Panc1 (cell line): ENCODE measurements at regions of chr1 and their contacts with region 1.

Region 1: DNA sequence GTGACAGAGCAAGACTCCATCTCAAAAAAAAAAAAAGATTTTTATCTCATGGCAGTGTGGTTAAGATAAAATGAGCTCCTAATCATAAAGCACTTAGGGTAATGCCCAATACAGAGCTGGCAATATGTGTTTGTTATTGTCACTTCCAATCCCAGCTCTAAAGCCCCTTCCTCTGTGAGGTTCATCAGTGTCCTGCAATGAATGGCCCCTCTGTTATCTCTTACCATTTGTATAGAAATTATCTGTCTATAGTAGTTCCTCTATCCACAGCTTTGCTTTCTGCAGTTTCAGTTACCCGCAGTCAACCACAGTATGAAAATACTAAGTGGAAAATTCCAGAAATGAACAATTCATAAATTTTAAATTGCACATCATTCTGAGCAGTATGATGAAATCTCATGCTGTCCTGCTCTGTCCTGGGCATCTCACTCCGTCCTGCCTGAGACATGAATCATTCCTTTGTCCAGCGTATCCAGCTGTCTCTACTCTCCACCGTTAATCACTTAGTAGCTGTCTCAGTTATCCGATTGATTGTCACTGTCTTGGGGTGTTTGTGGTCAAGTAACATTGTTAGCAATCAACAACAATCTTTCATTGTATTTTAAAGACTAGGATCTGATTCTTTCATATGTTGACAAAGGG is 50.2 kb upstream of the DNAH14 start:
- DNase-seq: no peak
- ATAC-seq: no peak
- H3K4me3 ChIP-seq: no peak overlapping the region
- H3K27ac ChIP-seq: no peak overlapping the region
- H3K4me1 ChIP-seq: no peaks in the 10 kb centered on the region
- H3K27me3 ChIP-seq: no peaks in the 10 kb centered on the region; the same call in 1 of the 2 replicates
- CTCF ChIP-seq: no peak

Region 2: DNA sequence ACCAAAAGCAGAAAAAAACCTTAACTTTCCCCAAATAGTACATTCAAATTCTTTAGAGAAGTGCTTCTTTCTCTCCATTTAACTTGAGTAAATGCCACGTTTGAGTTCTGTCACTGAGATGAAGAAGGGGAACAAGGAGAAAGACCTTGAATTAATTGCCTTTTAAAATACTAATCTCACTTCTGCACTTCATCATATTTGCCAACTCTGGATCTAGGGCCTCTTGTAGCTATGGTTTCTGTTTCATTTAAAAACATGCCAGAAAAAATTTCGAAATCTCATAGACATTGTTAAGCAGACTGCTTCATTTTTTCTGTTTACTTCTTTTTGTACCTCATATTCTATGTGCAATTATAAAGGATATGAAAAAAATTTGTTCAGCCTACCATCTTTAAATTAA is 1368.8 kb after region 1 on chr1:
- CTCF ChIA-PET with region 1: no interaction called
- POLR2A ChIA-PET with region 1: interaction called, 16 read pairs
- in situ Hi-C with region 1: no loop called
- intact Hi-C with region 1: no loop called
- DNase-seq: no peak
- ATAC-seq: no peak
- H3K4me3 ChIP-seq: no peak overlapping the region
- H3K27ac ChIP-seq: no peak overlapping the region
- H3K4me1 ChIP-seq: no peaks in the 10 kb centered on the region
- H3K27me3 ChIP-seq: no peaks in the 10 kb centered on the region
- CTCF ChIP-seq: no peak